ENCODE measurements at regions of chr3 and their contacts with region 1.

Region 1: GRCh38 chr3:46923559-46924350 is 46.2 kb downstream of the PTH1R start:
- DNase-seq: no peak
- H3K4me3 Mint-ChIP-seq: no peak overlapping the region
- H3K27ac Mint-ChIP-seq: peak overlapping the region; percentile 35
- H3K4me1 Mint-ChIP-seq: no peaks in the 10 kb centered on the region
- H3K27me3 Mint-ChIP-seq: no peaks in the 10 kb centered on the region
- CTCF ChIP-seq: peak; percentile 74

Region 2: DNA sequence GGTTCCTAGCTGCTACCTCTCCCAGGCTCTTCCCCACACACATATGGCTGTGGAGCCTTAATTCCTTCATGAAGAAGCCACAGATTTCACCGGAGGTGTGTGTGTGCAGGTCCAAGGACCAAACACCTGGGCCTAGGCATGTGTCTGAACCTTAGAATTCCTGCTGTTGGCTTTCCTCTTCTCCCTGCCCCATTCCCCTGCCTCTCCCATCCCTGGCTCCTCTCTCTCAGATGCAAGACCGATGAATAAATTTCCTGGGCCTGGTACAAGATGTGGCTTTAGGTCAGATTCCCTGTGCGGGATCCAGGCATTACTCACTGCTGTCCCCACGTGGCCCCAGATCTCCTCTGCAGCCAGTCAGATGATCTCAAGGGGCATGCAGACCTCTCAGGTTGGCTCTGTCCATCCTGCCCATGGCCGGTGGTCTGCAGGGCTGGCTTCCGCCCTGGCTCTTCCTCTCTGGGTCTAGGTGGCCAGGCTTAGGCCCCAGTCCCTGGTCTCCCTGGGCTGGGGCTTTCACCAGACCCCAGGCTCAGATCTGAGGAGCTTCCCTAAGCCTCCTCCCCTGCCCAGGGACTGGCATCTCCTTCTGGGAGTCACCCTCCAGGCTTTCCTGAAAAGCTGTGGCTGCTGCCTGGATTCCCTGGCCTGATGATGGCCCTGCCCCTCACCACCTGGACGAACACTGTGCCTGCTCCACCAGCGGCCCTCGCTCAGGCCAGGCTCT is 1016.9 kb before region 1 on chr3:
- CTCF ChIA-PET with region 1: no interaction called
- POLR2A ChIA-PET with region 1: no interaction called
- intact Hi-C with region 1: no loop called
- DNase-seq: peak; percentile 60
- H3K4me3 Mint-ChIP-seq: no peak overlapping the region
- H3K27ac Mint-ChIP-seq: no peak overlapping the region
- H3K4me1 Mint-ChIP-seq: peaks cover 5% of the 10 kb centered on the region
- H3K27me3 Mint-ChIP-seq: peaks cover 10% of the 10 kb centered on the region
- CTCF ChIP-seq: peak; percentile 54

Region 3: DNA sequence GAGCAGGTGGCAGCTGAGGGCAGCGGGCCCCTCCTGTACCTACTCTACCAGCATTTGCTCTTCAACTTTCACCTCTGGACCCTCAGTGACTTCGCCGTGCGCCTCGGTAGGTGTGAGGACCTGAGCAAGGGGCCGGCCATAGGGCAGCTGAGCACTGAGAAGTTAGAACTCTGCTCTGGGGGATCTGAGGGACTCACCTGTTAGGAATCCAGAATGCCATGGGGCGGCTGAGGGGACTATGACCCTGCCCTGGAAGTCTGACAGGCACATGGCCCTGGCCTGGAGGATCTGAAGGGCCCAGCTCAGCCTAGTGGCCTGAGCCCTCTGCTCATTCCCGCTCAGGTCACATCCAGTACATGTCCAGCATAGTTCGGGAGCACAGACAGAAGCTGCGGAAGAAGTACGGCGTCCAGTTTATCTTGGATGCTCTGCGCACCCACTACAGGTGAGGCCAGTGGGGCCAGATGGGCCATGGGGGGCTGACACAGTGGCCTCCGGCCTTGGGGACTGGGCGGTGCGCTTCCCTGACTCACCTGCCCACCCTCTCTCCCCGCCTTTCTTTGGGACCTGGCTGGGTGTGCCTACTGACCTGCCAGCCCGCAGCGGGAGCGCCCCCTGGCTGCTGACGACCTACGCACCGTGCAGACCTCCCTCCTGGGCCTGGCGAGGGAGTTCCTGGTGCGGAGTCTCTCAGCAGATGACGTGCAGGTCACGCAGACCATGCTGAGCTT is 74.5 kb after region 1 on chr3:
- CTCF ChIA-PET with region 1: interaction called, 10 read pairs
- POLR2A ChIA-PET with region 1: no interaction called
- intact Hi-C with region 1: no loop called
- DNase-seq: peak; percentile 69
- H3K4me3 Mint-ChIP-seq: no peak overlapping the region
- H3K27ac Mint-ChIP-seq: no peak overlapping the region
- H3K4me1 Mint-ChIP-seq: peaks cover 5% of the 10 kb centered on the region
- H3K27me3 Mint-ChIP-seq: no peaks in the 10 kb centered on the region
- CTCF ChIP-seq: peak; percentile 80

Measured in MCF 10A (cell line).